Activated T-helper 1 cell treated with anti-CD3 and anti-CD28 coated beads, Interleukin-12 subunit alpha, Interleukin-12 subunit beta, Interleukin-2, Interleukin-4 antibody, amounts not matched to agents 30 ng/mL and 10 ng/mL and 1 ng/mL, durations not matched to agents 14 hours and 24 hours and 36 hours (primary cell): ENCODE measurements at regions of chr3 and their contacts with region 1.

Region 1: GRCh38 chr3:131381444-131382291 is at the start of gene NUDT16:
- DNase-seq: peak; percentile 98
- H3K4me3 Mint-ChIP-seq: peak within 1 kb of the TSS; percentile 92
- H3K27ac Mint-ChIP-seq: peak within 1 kb of the TSS; percentile 90
- H3K4me1 Mint-ChIP-seq: peaks cover 52% of the 10 kb centered on the region
- H3K27me3 Mint-ChIP-seq: no peaks in the 10 kb centered on the region
- total RNA-seq, gene NUDT16: 10.6 and 11.5 TPM in 2 replicates

Region 2: DNA sequence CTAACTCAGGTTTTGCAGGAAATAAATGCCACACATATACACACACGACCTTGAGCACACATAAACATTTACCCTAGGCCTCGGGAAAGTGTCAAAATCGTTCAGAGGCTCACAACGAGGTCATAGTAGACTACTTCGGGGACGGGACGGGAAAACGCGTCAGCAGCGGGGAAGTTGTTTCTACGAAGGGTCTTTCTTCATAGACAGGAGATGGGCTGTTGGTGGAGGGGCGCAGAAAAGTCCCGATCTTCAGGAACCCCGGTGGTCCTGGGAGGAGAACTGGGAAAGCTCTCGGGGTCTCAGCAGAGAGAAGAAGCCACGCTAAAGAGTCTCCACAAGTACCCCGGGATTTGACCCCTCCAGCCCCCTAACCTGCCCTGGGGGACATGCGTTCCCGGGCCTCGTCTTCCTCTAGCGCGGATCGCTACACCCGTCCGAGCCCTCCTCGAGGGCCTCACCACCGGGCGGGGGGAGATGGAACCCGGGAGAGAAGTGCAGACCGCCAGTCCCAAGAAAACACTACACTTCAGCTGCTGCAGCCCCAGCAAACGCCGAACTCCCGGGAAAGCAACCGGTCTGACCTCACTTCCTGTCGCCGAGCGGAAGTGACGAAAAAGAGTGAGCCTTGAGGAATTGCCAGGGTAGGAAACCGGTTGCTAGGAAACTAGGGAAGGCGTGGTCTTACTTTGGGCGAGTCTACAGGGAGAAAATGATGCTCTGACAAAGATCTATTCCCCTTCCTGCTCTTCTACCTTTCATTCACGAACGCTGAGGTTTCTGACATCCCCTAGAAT is 635.2 kb before region 1 on chr3 and contains the start of gene PIK3R4:
- intact Hi-C with region 1: loop called (anchors 2 kb)
- DNase-seq: peak; percentile 94
- H3K4me3 Mint-ChIP-seq: peak within 1 kb of the TSS; percentile 90
- H3K27ac Mint-ChIP-seq: peak within 1 kb of the TSS; percentile 97
- H3K4me1 Mint-ChIP-seq: peaks cover 42% of the 10 kb centered on the region
- H3K27me3 Mint-ChIP-seq: no peaks in the 10 kb centered on the region
- total RNA-seq, gene PIK3R4: 33.1 and 35.4 TPM in 2 replicates

Region 3: GRCh38 chr3:130905551-130905950 is 476.1 kb before region 1 on chr3:
- intact Hi-C with region 1: loop called (anchors 5 kb)
- DNase-seq: no peak
- H3K4me3 Mint-ChIP-seq: no peak overlapping the region
- H3K27ac Mint-ChIP-seq: peak overlapping the region; percentile 51
- H3K4me1 Mint-ChIP-seq: peaks cover 65% of the 10 kb centered on the region
- H3K27me3 Mint-ChIP-seq: no peaks in the 10 kb centered on the region

Region 4: GRCh38 chr3:131470377-131470776 is 88.7 kb after region 1 on chr3:
- intact Hi-C with region 1: loop called (anchors 2 kb)
- DNase-seq: no peak
- H3K4me3 Mint-ChIP-seq: no peak overlapping the region
- H3K27ac Mint-ChIP-seq: peak overlapping the region; percentile 20
- H3K4me1 Mint-ChIP-seq: peaks cover 26% of the 10 kb centered on the region
- H3K27me3 Mint-ChIP-seq: no peaks in the 10 kb centered on the region